ENCODE measurements at regions of chr12 and their contacts with region 1.

Region 1: DNA sequence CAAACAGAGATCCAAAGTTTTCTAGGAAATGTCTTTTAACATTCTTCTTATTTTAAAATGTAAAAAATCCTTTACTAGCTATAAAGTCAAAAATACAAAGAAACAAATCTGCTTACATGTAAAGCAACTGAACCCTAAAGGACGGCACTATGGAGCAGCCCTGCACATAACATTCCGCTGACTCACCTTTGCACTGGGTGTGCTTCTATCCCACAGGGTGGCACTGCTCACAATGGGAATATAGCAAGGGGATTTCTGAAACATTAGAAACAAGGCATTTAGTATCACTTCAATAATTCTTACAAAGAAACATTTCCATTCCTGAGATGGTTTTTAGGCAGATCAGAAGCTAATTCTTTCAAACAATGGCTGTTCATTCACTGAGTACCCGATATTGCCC is 94.3 kb downstream of the C12orf42 start:
- DNase-seq: no peak
- CTCF ChIP-seq: no peak

Region 2: GRCh38 chr12:103369929-103370328 is 31.5 kb before region 1 on chr12:
- CTCF ChIA-PET with region 1: no interaction called
- POLR2A ChIA-PET with region 1: no interaction called
- DNase-seq: no peak
- CTCF ChIP-seq: no peak

Region 3: DNA sequence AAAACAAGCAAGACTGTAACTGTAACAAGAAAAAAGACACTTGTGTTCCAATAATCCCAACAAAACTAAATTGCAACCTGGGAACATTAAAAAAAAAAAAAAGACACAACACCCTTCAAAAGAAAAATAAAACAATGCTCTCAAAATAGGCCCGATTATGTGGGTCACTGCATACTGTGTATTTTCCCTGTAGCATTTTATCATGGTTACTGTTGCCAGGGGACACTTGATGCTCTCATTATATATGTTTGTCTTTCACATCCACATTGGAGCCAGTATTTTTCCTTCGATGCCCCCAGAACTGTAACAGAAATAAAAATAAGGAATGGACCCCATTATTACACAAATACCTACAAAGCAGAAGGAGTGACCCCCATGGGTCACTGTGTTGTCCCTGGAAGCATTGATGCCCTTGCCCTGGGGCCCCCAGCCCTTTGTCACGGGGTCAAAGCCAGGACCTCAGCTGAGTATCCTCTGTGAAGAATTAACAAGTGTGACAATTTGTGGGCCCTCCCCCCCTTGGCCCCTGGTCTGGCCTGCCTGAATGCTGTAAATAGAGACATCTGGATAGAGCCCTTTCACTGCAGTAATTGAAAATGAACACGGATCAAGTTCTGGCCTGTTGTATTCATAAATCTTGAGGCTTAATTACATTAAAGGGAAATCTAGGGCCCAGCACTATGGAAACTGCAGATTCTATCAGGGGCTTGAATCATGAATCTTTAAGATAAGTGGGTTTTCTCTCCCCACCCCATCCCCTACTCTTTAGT is 21.5 kb after region 1 on chr12:
- CTCF ChIA-PET with region 1: interaction called, 10 read pairs
- POLR2A ChIA-PET with region 1: no interaction called
- DNase-seq: no peak
- CTCF ChIP-seq: no peak

Measured in GM10248 (cell line).